A673 (cell line): ENCODE measurements at regions of chr2 and their contacts with region 1.

Region 1: GRCh38 chr2:58606799-58607198 is 365.7 kb upstream of the FANCL start:
- DNase-seq: no peak
- H3K4me3 ChIP-seq: no peak overlapping the region
- H3K27ac ChIP-seq: no peak overlapping the region
- H3K4me1 ChIP-seq: no peaks in the 10 kb centered on the region
- H3K27me3 ChIP-seq: peaks cover 3% of the 10 kb centered on the region
- CTCF ChIP-seq: no peak

Region 2: GRCh38 chr2:58584606-58585118 is 22.1 kb before region 1 on chr2:
- CTCF ChIA-PET with region 1: no interaction called
- POLR2A ChIA-PET with region 1: no interaction called
- intact Hi-C with region 1: no loop called
- DNase-seq: no peak
- H3K4me3 ChIP-seq: no peak overlapping the region
- H3K27ac ChIP-seq: no peak overlapping the region
- H3K4me1 ChIP-seq: no peaks in the 10 kb centered on the region
- H3K27me3 ChIP-seq: no peaks in the 10 kb centered on the region
- CTCF ChIP-seq: no peak

Region 3: GRCh38 chr2:58629545-58630119 is 22.8 kb after region 1 on chr2:
- CTCF ChIA-PET with region 1: no interaction called
- POLR2A ChIA-PET with region 1: no interaction called
- intact Hi-C with region 1: loop called (anchors 2 kb)
- DNase-seq: no peak
- H3K4me3 ChIP-seq: no peak overlapping the region
- H3K27ac ChIP-seq: no peak overlapping the region
- H3K4me1 ChIP-seq: no peaks in the 10 kb centered on the region
- H3K27me3 ChIP-seq: no peaks in the 10 kb centered on the region
- CTCF ChIP-seq: no peak